ENCODE measurements at regions of chr3 and their contacts with region 1.

Region 1: GRCh38 chr3:111967651-111968274 is 11.1 kb upstream of the ABHD10 start:
- DNase-seq: peak; percentile 46
- H3K4me3 ChIP-seq: peak overlapping the region in 1 of 2 experiments; percentile 10; a peak in 1 of 4 replicates
- H3K27ac ChIP-seq: peak overlapping the region in 1 of 2 experiments; percentile 50; a peak in 1 of 4 replicates
- H3K4me1 ChIP-seq: peaks cover 2 to 7% of the 10 kb centered on the region in 2 experiments; a peak in 2 of 4 replicates
- H3K27me3 ChIP-seq: no peaks in the 10 kb centered on the region
- CTCF ChIP-seq: peak; percentile 87
- EP300 ChIP-seq: no peak
- RAD21 ChIP-seq: peak; percentile 93

Region 2: GRCh38 chr3:111668912-111669488 is 298.8 kb before region 1 on chr3:
- CTCF ChIA-PET with region 1: interaction called, 14 read pairs
- POLR2A ChIA-PET with region 1: no interaction called
- DNase-seq: peak; percentile 48
- H3K4me3 ChIP-seq: no peak overlapping the region; a peak in 1 of 4 replicates
- H3K27ac ChIP-seq: peak overlapping the region in 1 of 2 experiments; percentile 80; a peak in 2 of 4 replicates
- H3K4me1 ChIP-seq: peaks cover 0 to 30% of the 10 kb centered on the region in 2 experiments
- H3K27me3 ChIP-seq: no peaks in the 10 kb centered on the region
- CTCF ChIP-seq: peak; percentile 90
- EP300 ChIP-seq: no peak; a peak in 1 of 4 replicates
- RAD21 ChIP-seq: peak; percentile 95

Region 3: GRCh38 chr3:111859974-111860859 is 107.5 kb before region 1 on chr3:
- CTCF ChIA-PET with region 1: interaction called, 17 read pairs
- POLR2A ChIA-PET with region 1: no interaction called
- DNase-seq: peak; percentile 69
- H3K4me3 ChIP-seq: peak overlapping the region; percentile 82 to 84
- H3K27ac ChIP-seq: peak overlapping the region; percentile 64 to 98; a peak in 3 of 4 replicates
- H3K4me1 ChIP-seq: peaks cover 7 to 21% of the 10 kb centered on the region in 2 experiments
- H3K27me3 ChIP-seq: no peaks in the 10 kb centered on the region
- CTCF ChIP-seq: peak; percentile 61
- EP300 ChIP-seq: peak in 1 of 2 experiments; percentile 30; a peak in 1 of 4 replicates
- RAD21 ChIP-seq: peak; percentile 56

Region 4: GRCh38 chr3:111978493-111979433 is 11.0 kb after region 1 on chr3 and contains the start of gene ABHD10:
- CTCF ChIA-PET with region 1: interaction called, 15 read pairs
- POLR2A ChIA-PET with region 1: interaction called, 3 read pairs
- DNase-seq: peak; percentile 90
- H3K4me3 ChIP-seq: peak within 1 kb of the TSS; percentile 84 to 92
- H3K27ac ChIP-seq: peak within 1 kb of the TSS; percentile 70 to 92
- H3K4me1 ChIP-seq: peaks cover 8 to 12% of the 10 kb centered on the region in 2 experiments; a peak in 3 of 4 replicates
- H3K27me3 ChIP-seq: no peaks in the 10 kb centered on the region
- CTCF ChIP-seq: no peak
- EP300 ChIP-seq: no peak
- RAD21 ChIP-seq: no peak
- polyA plus RNA-seq, gene ABHD10: 14.8 and 18.3 TPM in 2 replicates

Region 5: GRCh38 chr3:112013058-112013783 is 45.5 kb after region 1 on chr3:
- CTCF ChIA-PET with region 1: interaction called, 30 read pairs
- POLR2A ChIA-PET with region 1: no interaction called
- DNase-seq: peak; percentile 48
- H3K4me3 ChIP-seq: no peak overlapping the region
- H3K27ac ChIP-seq: no peak overlapping the region
- H3K4me1 ChIP-seq: peaks cover 3 to 8% of the 10 kb centered on the region in 2 experiments; a peak in 2 of 4 replicates
- H3K27me3 ChIP-seq: no peaks in the 10 kb centered on the region
- CTCF ChIP-seq: peak; percentile 66
- EP300 ChIP-seq: no peak
- RAD21 ChIP-seq: peak; percentile 81